Common myeloid progenitor, CD34-positive (primary cell): ENCODE measurements at regions of chr12 and their contacts with region 1.

Region 1: GRCh38 chr12:56601503-56601902 is 28.6 kb downstream of the BAZ2A start:
- DNase-seq: peak in 2 of 3 donors; percentile 59 to 61
- H3K4me3 ChIP-seq: no peak overlapping the region
- H3K27ac ChIP-seq: no peak overlapping the region
- H3K4me1 ChIP-seq: no peaks in the 10 kb centered on the region
- H3K27me3 ChIP-seq: no peaks in the 10 kb centered on the region

Region 2: DNA sequence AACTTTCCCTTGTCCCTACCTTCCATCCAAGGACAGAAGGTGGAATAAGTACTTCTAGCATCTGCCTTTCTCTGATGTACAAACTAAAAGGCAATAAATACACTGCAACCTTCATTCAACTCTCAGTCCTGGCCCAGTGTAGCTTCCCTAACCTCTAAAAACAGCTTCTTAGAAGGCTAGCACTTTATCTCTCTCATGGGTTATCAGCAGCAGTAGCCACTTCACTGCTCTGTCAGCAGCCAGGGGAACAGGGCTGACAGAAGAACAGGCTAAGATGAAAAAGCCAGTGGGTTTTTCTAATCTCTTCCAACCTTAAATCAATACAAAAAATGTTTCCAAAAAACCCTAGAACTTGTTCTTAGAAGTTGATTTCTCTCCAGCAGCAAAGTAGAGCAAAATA is 15.4 kb after region 1 on chr12:
- CTCF ChIA-PET with region 1: interaction called, 316 read pairs
- POLR2A ChIA-PET with region 1: no interaction called
- DNase-seq: no peak
- H3K4me3 ChIP-seq: no peak overlapping the region
- H3K27ac ChIP-seq: no peak overlapping the region
- H3K4me1 ChIP-seq: no peaks in the 10 kb centered on the region
- H3K27me3 ChIP-seq: no peaks in the 10 kb centered on the region